AG04449 (cell line): ENCODE measurements at regions of chr11 and their contacts with region 1.

Region 1: GRCh38 chr11:69101115-69101791 is 52.5 kb downstream of the TPCN2 start:
- DNase-seq: no peak
- H3K4me3 ChIP-seq: no peak overlapping the region
- CTCF ChIP-seq: peak; percentile 99

Region 2: GRCh38 chr11:69115586-69116560 is 14.6 kb after region 1 on chr11:
- CTCF ChIA-PET with region 1: interaction called, 24 read pairs
- POLR2A ChIA-PET with region 1: no interaction called
- DNase-seq: no peak
- H3K4me3 ChIP-seq: no peak overlapping the region
- CTCF ChIP-seq: no peak

Region 3: DNA sequence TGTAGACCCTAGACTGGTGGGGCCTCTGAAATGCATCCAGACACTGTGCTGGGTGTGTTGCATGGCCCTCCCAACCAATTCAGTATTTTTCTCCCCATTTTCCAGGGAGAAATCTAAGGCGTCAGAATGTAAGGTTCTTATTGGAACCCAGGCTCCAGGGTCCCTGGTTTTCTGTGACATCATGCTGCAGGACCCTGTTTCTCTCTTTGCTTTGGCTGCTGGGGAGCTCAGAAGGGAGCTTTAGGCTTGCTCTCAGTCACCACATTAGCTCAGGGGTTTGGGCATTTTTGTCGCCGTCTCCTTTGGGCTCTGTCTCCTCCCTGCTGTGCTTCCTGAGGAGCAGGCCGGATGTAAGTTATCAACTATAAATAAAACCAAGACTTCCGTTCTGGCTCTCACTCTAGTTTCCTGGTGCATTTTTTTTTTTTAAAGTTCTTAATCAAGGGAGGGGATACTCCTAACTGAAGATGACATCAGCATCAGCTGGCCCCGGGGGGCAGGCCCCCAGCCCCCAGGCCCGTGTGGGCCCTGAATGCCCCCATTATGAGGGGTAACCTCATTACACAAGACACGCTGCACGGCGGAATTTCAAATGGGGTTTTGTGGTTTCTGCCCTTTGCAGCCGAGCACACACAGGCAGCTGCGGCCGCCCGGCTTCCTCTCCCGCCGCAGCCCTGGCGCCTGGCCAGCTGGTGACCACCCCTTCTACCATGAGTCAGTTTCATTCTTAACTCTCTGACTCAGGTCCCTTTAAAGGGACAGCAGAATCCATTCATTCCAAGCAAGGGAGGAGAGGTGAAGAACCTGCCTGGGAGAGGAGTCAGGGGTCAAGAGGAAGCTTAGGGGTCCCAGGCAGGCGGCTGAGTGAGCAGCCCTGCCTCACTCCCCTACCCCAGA is 195.9 kb after region 1 on chr11:
- CTCF ChIA-PET with region 1: interaction called, 13 read pairs
- POLR2A ChIA-PET with region 1: interaction called, 3 read pairs
- DNase-seq: peak; percentile 95
- H3K4me3 ChIP-seq: no peak overlapping the region; the same call in 1 of the 2 replicates
- CTCF ChIP-seq: no peak

Region 4: GRCh38 chr11:69654569-69655327 is 553.5 kb after region 1 on chr11:
- CTCF ChIA-PET with region 1: interaction called, 29 read pairs
- POLR2A ChIA-PET with region 1: interaction called, 3 read pairs
- DNase-seq: no peak
- H3K4me3 ChIP-seq: no peak overlapping the region
- CTCF ChIP-seq: no peak

Region 5: DNA sequence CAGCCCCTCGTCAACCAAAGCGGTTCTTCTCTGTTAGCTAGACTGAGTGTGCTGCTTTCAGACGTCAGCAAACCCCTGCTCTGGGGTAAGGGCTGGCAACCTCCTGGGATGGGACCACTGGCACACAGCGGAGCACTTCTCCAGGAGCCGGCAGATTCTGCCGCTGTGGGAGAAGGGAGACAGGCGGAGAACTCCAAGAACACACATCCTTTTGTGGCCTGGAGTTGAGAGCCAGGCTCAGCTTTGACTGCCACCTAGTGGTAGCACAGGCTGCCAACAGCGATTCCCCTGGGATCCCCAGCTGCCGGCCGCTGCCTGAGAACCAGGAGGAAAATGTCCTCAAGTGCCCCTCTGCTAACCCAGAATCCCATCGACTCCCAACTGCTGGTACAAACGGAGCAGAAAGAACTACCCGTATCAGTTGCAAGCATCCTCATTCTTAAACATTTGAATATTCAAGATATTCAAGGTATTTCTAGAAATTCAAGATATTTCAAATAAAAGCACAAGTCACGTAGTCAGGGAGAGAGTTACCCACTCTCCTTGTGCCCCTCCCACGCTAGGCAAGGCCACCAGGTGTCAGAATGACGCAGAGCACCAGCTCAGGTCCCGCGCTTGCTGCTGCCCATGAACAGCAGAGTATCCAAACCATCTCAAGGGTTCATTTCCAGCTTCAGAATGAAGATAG is 569.0 kb after region 1 on chr11:
- CTCF ChIA-PET with region 1: interaction called, 188 read pairs
- POLR2A ChIA-PET with region 1: interaction called, 10 read pairs
- DNase-seq: peak; percentile 31
- H3K4me3 ChIP-seq: no peak overlapping the region
- CTCF ChIP-seq: peak; percentile 96